Activated CD8-positive, alpha-beta T cell treated with anti-CD3 and anti-CD28 coated beads for 36 hours (primary cell): ENCODE measurements at regions of chr7 and their contacts with region 1.

Region 1: GRCh38 chr7:50369143-50370026 is 64.9 kb downstream of the IKZF1 start:
- DNase-seq: peak; percentile 60
- ATAC-seq: peak; percentile 24
- H3K4me3 Mint-ChIP-seq: peak overlapping the region; percentile 5
- H3K27ac Mint-ChIP-seq: peak overlapping the region; percentile 95
- H3K4me1 Mint-ChIP-seq: peaks cover 97% of the 10 kb centered on the region
- H3K27me3 Mint-ChIP-seq: no peaks in the 10 kb centered on the region
- CTCF ChIP-seq: peak; percentile 94

Region 2: DNA sequence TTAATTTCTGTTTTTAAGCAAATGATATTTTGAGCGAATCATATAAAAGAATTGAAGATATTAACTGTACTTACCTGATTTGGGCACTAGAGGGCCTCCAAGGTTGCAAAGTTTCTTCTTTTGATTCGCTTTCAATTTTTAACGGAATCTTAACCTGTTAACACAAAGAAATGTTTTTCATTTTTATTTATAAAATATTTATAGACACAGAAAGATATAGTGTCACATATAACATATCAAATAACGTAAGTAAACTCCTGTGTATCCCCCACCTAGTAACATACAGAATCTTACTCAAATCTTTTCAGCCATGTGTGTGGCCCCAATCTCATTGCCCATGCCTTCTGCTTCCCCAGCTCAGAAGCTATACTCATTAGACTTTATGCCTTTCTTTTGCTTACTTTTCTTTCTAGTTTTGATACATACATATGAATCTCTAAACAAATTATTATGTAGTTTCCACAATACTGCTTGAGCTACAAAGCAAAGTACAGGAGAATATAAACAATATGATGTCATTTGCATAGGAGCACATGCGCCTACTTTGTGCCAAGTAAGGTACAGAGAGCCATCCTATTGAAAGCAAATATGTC is 226.9 kb before region 1 on chr7:
- CTCF ChIA-PET with region 1: interaction called, 10 read pairs
- POLR2A ChIA-PET with region 1: interaction called, 3 read pairs
- intact Hi-C with region 1: loop called (anchors 5 kb)
- DNase-seq: peak; percentile 56
- ATAC-seq: peak; percentile 68
- H3K4me3 Mint-ChIP-seq: peak overlapping the region; percentile 50
- H3K27ac Mint-ChIP-seq: peak overlapping the region; percentile 87
- H3K4me1 Mint-ChIP-seq: peaks cover 43% of the 10 kb centered on the region
- H3K27me3 Mint-ChIP-seq: peaks cover 3% of the 10 kb centered on the region
- CTCF ChIP-seq: peak; percentile 89

Region 3: DNA sequence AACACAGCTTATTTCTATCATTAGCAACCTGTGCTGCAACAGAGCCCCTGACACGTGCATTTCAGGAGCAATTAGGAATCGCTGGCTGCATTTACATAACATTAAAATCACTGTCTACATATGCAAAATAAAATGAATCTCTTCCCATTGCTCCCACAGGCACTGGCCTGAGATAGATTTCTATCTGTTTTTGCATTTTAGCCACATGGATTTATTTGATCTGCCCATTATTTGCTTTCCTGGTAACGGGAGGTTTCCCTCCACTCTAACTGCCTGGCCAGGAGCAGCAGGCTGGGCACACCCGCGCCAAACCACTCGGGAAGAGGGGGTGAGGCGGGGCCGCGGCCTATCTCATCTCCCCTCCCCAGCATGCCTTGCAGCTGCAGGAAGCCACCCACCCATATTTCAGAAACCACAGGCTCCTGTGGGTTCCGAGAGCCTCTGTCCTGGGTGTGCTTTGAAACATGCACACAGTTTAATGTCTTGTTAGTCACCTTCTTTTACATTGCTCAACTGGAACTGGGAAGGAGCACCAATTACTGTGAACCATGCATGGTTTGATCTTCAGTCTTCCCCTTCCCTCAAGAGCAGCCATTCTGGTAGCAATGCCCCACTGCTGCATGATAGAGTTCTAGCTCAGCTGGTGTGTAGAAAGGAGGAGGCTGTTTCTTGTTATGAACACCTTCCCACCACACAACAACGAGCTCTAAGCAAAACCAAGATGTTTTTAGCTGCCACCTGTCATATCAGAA is 102.6 kb before region 1 on chr7:
- CTCF ChIA-PET with region 1: interaction called, 4 read pairs
- POLR2A ChIA-PET with region 1: interaction called, 22 read pairs
- intact Hi-C with region 1: no loop called
- DNase-seq: peak; percentile 92
- ATAC-seq: peak; percentile 62
- H3K4me3 Mint-ChIP-seq: peak overlapping the region; percentile 63
- H3K27ac Mint-ChIP-seq: peak overlapping the region; percentile 92
- H3K4me1 Mint-ChIP-seq: peaks cover 93% of the 10 kb centered on the region
- H3K27me3 Mint-ChIP-seq: no peaks in the 10 kb centered on the region
- CTCF ChIP-seq: no peak

Region 4: GRCh38 chr7:50282813-50283605 is 86.4 kb before region 1 on chr7:
- CTCF ChIA-PET with region 1: no interaction called
- POLR2A ChIA-PET with region 1: no interaction called
- intact Hi-C with region 1: no loop called
- DNase-seq: no peak
- ATAC-seq: no peak
- H3K4me3 Mint-ChIP-seq: peak overlapping the region; percentile 63
- H3K27ac Mint-ChIP-seq: peak overlapping the region; percentile 89
- H3K4me1 Mint-ChIP-seq: peaks cover 72% of the 10 kb centered on the region
- H3K27me3 Mint-ChIP-seq: no peaks in the 10 kb centered on the region
- CTCF ChIP-seq: no peak

Region 5: DNA sequence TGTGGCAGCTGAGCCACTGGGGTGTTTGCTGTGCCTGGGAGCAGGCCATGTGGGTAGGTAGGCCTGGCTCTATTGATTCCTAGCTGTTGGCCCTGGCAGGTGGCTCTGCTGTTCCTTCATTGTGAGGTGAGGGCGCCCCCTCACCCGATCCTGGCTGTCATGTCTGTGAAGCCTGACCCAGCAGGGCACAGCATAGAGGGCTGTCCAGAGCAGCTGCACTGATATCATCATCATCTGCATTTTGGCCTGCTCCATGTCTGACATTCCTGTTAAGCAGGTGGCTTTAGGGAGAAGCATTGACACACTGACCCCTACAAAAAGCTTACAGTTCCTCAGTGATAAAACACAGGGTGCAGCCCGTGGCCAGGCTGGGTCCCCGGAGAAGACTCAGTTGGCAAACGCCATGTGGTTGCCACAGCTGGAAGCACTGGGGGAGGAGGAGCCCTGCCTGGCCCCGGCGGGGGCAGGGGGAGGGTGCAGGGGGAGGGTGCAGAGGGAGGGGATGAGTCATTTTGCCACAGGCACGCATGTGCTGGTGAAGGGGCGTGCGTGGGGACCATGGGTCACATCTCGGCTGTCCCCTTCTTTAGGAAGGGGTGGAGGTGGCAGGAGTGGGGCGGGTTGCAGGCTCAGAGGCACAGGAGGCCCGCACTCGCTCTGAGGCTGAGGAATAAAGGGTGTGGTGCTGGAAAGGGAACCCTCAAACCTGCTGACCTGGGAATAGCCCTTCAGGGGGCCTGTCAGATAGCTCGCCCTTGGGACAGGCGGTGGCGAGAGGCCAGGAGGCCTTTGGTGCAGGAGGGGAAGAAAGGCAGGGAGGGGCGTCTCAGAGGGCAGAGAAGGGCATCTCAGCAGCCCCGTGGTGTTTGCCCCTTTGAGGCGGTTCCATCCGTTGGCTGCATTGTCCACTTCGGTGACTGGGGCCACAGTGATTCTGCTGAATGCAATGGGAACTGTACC is 33.3 kb before region 1 on chr7:
- CTCF ChIA-PET with region 1: interaction called, 82 read pairs
- POLR2A ChIA-PET with region 1: interaction called, 1,646 read pairs
- intact Hi-C with region 1: loop called (anchors 5 kb)
- DNase-seq: peak; percentile 93
- ATAC-seq: peak; percentile 53
- H3K4me3 Mint-ChIP-seq: no peak overlapping the region
- H3K27ac Mint-ChIP-seq: no peak overlapping the region
- H3K4me1 Mint-ChIP-seq: peaks cover 21% of the 10 kb centered on the region
- H3K27me3 Mint-ChIP-seq: no peaks in the 10 kb centered on the region
- CTCF ChIP-seq: no peak

Region 6: DNA sequence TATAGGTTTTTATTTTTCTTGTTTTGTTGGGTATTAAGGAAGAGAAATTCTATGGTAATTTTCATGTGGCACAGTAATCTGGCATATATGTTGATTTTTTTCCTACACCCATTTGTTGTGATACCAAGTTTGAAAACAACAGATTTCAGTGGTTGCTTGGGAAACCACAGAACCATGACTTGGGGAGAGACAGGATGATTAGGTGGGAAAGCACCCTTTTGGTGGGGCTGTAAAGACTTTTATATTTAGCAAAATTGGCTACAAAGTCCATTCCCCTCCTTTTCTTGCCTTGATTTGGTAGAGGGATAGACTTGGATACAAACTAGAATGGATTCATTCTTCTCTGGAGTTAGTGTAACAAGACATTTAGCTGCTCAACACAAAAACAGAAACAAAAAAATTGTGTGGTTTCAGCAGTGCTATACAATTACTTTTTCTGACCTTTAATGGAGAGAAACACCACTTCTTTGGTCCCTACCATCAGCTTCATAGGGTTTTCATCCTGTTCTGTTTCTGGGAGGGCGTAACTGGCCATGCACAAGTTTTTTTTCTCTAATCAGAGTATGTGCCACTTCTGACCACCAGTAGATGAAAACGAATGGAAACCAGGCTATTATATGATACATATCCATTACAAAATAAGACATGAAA is 28.1 kb after region 1 on chr7:
- CTCF ChIA-PET with region 1: interaction called, 4 read pairs
- POLR2A ChIA-PET with region 1: interaction called, 55 read pairs
- intact Hi-C with region 1: loop called (anchors 2 kb)
- DNase-seq: peak; percentile 69
- ATAC-seq: peak; percentile 16
- H3K4me3 Mint-ChIP-seq: no peak overlapping the region
- H3K27ac Mint-ChIP-seq: peak overlapping the region; percentile 88
- H3K4me1 Mint-ChIP-seq: peaks cover 81% of the 10 kb centered on the region
- H3K27me3 Mint-ChIP-seq: no peaks in the 10 kb centered on the region
- CTCF ChIP-seq: no peak

Region 7: GRCh38 chr7:50456371-50457123 is 87.2 kb after region 1 on chr7:
- CTCF ChIA-PET with region 1: no interaction called
- POLR2A ChIA-PET with region 1: no interaction called
- intact Hi-C with region 1: no loop called
- DNase-seq: no peak
- ATAC-seq: no peak
- H3K4me3 Mint-ChIP-seq: no peak overlapping the region
- H3K27ac Mint-ChIP-seq: no peak overlapping the region
- H3K4me1 Mint-ChIP-seq: no peaks in the 10 kb centered on the region
- H3K27me3 Mint-ChIP-seq: no peaks in the 10 kb centered on the region
- CTCF ChIP-seq: no peak

Region 8: DNA sequence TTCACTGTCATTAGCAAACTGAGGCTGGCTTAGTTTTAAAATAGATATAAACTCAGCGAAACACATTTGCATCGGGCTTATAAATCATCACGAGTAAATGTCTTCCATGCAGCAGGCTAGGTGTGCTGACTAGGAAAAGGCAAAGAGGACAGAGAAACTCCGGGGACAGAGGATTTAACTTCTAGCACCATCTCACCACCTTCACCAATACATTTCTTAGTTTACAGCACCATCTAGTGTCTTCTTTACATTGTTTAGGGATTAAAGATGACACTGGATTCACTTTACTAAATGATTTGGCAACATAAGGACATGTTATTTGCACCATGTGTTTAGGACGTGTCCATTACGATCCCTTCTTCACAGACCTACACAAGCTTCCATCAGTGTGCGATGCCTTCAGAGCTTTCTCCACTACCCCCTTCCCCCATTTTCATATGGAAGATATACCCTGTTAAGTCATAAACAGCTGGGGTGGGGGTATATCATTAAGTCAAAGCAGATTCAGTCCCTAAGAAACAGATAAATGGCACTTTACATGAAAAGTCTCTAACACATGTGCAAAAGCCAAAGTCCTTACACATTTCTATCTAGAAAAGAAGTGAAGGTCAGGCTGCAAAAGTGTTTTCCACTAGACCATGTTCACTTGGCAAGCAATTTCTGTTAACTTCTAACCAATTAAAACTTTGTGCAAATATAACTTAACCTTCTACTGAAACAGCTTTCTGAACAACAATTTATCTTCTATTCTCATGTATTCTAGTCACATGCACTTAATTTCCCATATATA is 310.0 kb after region 1 on chr7:
- CTCF ChIA-PET with region 1: no interaction called
- POLR2A ChIA-PET with region 1: no interaction called
- intact Hi-C with region 1: no loop called
- DNase-seq: no peak
- ATAC-seq: peak; percentile 61
- H3K4me3 Mint-ChIP-seq: no peak overlapping the region
- H3K27ac Mint-ChIP-seq: no peak overlapping the region
- H3K4me1 Mint-ChIP-seq: peaks cover 2% of the 10 kb centered on the region
- H3K27me3 Mint-ChIP-seq: peaks cover 4% of the 10 kb centered on the region
- CTCF ChIP-seq: peak; percentile 43